Esophagus muscularis mucosa (tissue), 4 donors: ENCODE measurements at regions of chr5 and their contacts with region 1.

Region 1: DNA sequence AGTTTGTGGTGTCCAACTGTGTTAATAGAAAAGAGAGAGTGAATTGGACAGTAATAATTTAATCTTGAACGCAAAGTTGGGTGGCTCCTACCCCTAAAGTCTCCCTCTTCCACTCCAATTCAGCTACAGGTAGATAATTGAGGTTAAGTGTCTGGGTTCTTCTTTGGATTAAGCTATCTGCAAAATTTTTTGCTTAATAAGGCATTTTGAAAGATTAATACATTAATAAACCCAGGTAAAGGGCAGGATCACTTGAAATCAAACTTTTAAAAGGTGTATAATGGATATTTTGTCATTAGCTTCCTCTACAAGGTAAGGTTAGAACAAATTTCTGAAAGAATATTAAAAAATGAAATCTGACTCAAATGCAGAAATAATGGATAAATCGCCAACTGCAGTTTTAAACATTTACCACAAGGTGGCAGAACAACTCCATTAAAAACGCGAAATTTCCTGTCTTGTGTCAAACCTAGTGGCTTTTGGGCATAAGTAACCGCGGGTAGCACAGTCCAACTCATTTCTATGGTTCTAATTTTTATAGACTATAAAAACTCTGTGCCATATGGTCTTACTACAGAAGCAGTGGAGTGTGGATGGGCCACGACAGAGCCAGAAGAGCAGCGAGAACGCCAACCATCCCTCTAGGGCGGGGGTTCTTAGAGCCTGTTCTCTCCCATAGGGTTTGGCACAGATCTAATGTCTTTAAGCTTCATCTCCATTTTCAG is 276.5 kb downstream of the ARHGEF28 start:
- DNase-seq: no peak
- H3K4me3 ChIP-seq: no peak overlapping the region
- H3K27ac ChIP-seq: no peak overlapping the region
- H3K4me1 ChIP-seq: peaks cover 0 to 8% (median 4%) of the 10 kb centered on the region in 4 donors
- H3K27me3 ChIP-seq: no peaks in the 10 kb centered on the region
- CTCF ChIP-seq: peak; percentile 88 to 91 (median 88)
- EP300 ChIP-seq: no peak
- POLR2A ChIP-seq: no peak

Region 2: GRCh38 chr5:74035521-74035981 is 133.1 kb after region 1 on chr5:
- intact Hi-C with region 1: loop called (anchors 5 kb)
- DNase-seq: no peak
- H3K4me3 ChIP-seq: no peak overlapping the region
- H3K27ac ChIP-seq: no peak overlapping the region
- H3K4me1 ChIP-seq: peaks cover 0 to 14% (median 13%) of the 10 kb centered on the region in 4 donors
- H3K27me3 ChIP-seq: no peaks in the 10 kb centered on the region
- CTCF ChIP-seq: peak; percentile 32 to 48 (median 38)
- EP300 ChIP-seq: no peak
- POLR2A ChIP-seq: no peak

Region 3: GRCh38 chr5:74640450-74640953 is 738.0 kb after region 1 on chr5 and contains the start of gene ENC1:
- intact Hi-C with region 1: loop called (anchors 2 kb)
- DNase-seq: peak; percentile 94
- H3K4me3 ChIP-seq: peak within 1 kb of the TSS; percentile 67 to 76 (median 71)
- H3K27ac ChIP-seq: peak within 1 kb of the TSS; percentile 71 to 85 (median 79)
- H3K4me1 ChIP-seq: peaks cover 36 to 47% (median 37%) of the 10 kb centered on the region in 4 donors
- H3K27me3 ChIP-seq: no peaks in the 10 kb centered on the region
- CTCF ChIP-seq: peak; percentile 29 to 72 (median 32)
- EP300 ChIP-seq: no peak
- POLR2A ChIP-seq: peak; percentile 21
- total RNA-seq, gene ENC1: 8.9 to 23.7 (median 13.1) TPM

Region 4: GRCh38 chr5:74648835-74649293 is 746.4 kb after region 1 on chr5:
- intact Hi-C with region 1: loop called (anchors 2 kb)
- DNase-seq: no peak
- H3K4me3 ChIP-seq: no peak overlapping the region
- H3K27ac ChIP-seq: no peak overlapping the region
- H3K4me1 ChIP-seq: peaks cover 0 to 9% (median 6%) of the 10 kb centered on the region in 4 donors
- H3K27me3 ChIP-seq: no peaks in the 10 kb centered on the region
- CTCF ChIP-seq: peak; percentile 70 to 75 (median 70)
- EP300 ChIP-seq: no peak
- POLR2A ChIP-seq: no peak